Esophagus muscularis mucosa (tissue), 4 donors: ENCODE measurements at regions of chr22 and their contacts with region 1.

Region 1: DNA sequence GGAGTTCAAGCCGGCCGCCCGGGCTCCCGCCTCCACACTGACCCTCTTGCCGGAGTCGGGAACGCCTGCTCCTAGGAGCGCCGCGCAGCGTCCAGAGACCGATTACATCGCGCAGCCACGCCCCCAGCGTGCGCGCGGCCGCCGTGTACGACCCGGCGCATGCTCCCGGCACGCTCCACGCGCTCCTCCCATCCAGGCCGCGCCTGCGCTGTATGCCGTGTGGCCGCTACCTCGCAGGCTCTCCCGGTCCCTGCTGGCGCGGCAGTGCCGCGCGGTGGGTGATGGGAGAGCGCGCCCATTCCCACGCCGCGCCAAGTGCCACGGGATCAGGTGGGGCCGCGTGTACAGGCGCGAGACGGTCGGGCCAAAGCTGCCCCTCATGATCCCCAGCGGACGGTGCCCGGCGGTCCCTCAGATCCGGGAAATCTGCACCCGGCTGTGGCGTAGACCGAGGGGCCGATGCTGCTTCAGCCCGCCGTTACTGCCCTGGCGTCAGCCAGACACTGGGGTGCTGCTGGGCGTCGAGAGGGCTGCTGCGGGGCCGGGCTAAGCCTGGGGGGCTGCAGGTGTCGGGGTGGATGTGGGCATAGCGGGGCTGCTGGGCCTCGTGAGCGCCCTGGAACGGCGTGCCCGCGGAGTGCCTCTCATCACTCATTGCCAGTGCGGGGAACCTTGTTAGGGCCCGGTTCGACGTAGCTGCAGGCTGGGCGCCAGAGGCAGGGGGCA is at the starts of genes GNB1L and RTL10:
- DNase-seq: peak; percentile 96
- H3K4me3 ChIP-seq: peak within 1 kb of the TSS; percentile 73 to 91 (median 78)
- H3K27ac ChIP-seq: peak within 1 kb of the TSS; percentile 92 to 98 (median 94)
- H3K4me1 ChIP-seq: peaks cover 28 to 47% (median 35%) of the 10 kb centered on the region in 4 donors
- H3K27me3 ChIP-seq: no peaks in the 10 kb centered on the region
- CTCF ChIP-seq: peak in 1 of 3 experiments; percentile 18
- EP300 ChIP-seq: no peak
- POLR2A ChIP-seq: peak; percentile 80
- total RNA-seq, gene GNB1L: 4.6 to 8.7 (median 6.8) TPM
- total RNA-seq, gene RTL10: 5.6 to 14.8 (median 11.1) TPM

Region 2: GRCh38 chr22:19656541-19657251 is 198.2 kb before region 1 on chr22:
- intact Hi-C with region 1: no loop called
- DNase-seq: no peak
- H3K4me3 ChIP-seq: no peak overlapping the region
- H3K27ac ChIP-seq: no peak overlapping the region
- H3K4me1 ChIP-seq: no peaks in the 10 kb centered on the region
- H3K27me3 ChIP-seq: peaks cover 0 to 6% (median 0%) of the 10 kb centered on the region in 4 donors
- CTCF ChIP-seq: no peak
- EP300 ChIP-seq: no peak
- POLR2A ChIP-seq: no peak

Region 3: GRCh38 chr22:19679522-19680101 is 175.3 kb before region 1 on chr22:
- intact Hi-C with region 1: no loop called
- DNase-seq: no peak
- H3K4me3 ChIP-seq: no peak overlapping the region
- H3K27ac ChIP-seq: no peak overlapping the region
- H3K4me1 ChIP-seq: peaks cover 0 to 4% (median 3%) of the 10 kb centered on the region in 4 donors
- H3K27me3 ChIP-seq: peaks cover 0 to 37% (median 0%) of the 10 kb centered on the region in 4 donors
- CTCF ChIP-seq: peak; percentile 66 to 83 (median 83)
- EP300 ChIP-seq: no peak
- POLR2A ChIP-seq: no peak

Region 4: GRCh38 chr22:19742160-19743066 is 112.5 kb before region 1 on chr22:
- intact Hi-C with region 1: no loop called
- DNase-seq: no peak
- H3K4me3 ChIP-seq: no peak overlapping the region
- H3K27ac ChIP-seq: no peak overlapping the region
- H3K4me1 ChIP-seq: peaks cover 0 to 7% (median 3%) of the 10 kb centered on the region in 4 donors
- H3K27me3 ChIP-seq: peaks cover 0 to 26% (median 0%) of the 10 kb centered on the region in 4 donors
- CTCF ChIP-seq: no peak
- EP300 ChIP-seq: no peak
- POLR2A ChIP-seq: no peak

Region 5: GRCh38 chr22:19879695-19880506 is 25.0 kb after region 1 on chr22:
- intact Hi-C with region 1: loop called (anchors 2 kb)
- DNase-seq: no peak
- H3K4me3 ChIP-seq: peak overlapping the region; percentile 18 to 47 (median 27)
- H3K27ac ChIP-seq: peak overlapping the region in 1 of 4 donors; percentile 20
- H3K4me1 ChIP-seq: peaks cover 24 to 40% (median 37%) of the 10 kb centered on the region in 4 donors
- H3K27me3 ChIP-seq: no peaks in the 10 kb centered on the region
- CTCF ChIP-seq: no peak
- EP300 ChIP-seq: no peak
- POLR2A ChIP-seq: no peak

Region 6: DNA sequence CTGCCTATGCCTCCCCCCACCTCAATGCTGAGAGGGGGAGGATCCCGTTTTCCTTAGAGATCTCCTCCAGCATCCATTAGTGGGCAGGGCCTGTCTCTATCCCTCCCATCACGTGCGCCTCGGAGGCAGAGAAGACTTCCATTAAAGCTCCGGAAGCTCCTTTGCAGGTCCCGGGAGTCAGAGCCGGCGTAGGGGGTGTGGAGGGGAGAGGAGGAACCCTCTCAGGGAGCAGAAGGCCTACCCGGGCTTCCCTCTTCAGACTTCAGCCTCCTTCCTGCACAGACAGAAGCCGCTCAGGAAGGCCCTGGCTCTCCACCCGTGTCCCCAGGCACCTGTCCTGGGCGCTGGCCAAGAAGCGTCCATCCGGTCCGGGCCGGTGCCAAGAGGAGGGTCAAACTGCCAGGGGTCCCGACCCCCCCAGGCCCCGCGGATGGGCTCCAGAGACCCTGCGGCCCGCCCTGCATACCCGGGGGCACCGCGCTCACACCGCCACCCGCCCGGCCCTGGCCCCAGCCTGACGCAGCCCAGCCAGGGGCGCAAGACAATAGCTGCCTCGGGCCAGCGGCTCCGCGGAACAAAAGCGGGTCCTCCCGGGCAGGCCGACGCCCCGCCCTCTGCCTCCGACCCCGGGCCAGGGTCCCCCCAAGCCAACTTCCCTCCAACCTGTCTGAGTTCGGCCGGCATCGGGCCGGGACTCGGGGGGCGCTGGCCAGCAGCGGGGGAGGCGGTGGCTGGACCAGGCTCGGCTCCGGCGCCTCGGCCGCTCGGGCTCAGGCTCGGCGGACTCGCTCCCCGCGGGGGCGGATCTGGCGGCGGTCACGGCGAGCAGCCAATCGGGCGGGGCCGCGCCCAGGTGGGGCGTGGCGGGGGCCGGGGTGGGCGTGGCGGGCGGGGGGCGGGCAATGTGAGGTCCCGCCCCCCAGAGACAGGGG is 131.7 kb after region 1 on chr22:
- intact Hi-C with region 1: no loop called
- DNase-seq: no peak
- H3K4me3 ChIP-seq: peak overlapping the region; percentile 69 to 85 (median 77)
- H3K27ac ChIP-seq: peak overlapping the region; percentile 90 to 92 (median 92)
- H3K4me1 ChIP-seq: peaks cover 51 to 66% (median 59%) of the 10 kb centered on the region in 4 donors
- H3K27me3 ChIP-seq: no peaks in the 10 kb centered on the region
- CTCF ChIP-seq: no peak
- EP300 ChIP-seq: no peak
- POLR2A ChIP-seq: peak; percentile 73